BJ (cell line): ENCODE measurements at regions of chr22 and their contacts with region 1.

Region 1: DNA sequence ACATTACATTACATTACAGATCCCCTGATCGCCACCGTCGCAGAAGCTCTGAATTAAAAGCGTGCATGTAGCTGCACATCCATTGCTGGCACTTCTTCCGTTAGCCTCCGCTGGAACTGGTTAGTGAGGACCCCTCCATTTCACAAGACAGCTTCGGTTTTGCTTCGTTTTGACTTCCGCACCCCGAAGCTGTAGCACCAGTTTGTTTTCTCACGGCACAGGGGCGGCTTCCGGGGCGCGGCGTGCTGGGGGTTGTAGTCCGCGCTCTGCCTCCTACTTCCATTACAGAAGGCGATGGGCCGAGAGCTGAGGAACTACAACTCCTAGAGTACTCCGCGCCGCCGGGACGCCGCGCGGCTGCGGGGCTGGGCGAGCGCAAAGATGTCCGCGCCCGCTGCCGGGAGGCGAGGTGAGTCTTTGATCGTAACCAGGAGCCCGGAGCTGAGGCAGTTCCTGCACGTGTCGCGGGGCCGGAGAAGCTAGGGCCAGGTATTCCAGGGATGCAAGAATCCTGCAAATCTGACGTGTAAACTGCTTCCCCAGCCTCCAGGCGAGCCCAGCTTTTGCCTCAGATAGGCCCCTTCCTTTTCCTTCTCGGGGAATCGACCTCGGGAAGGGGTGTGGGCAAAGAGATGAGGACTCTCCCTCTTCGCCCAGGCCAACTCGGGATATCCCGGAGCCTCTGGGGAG is at the start of gene PEX26:
- DNase-seq: peak; percentile 70
- H3K4me3 ChIP-seq: peak within 1 kb of the TSS; percentile 97
- H3K27me3 ChIP-seq: no peaks in the 10 kb centered on the region
- CTCF ChIP-seq: no peak
- polyA plus RNA-seq, gene PEX26: 21.1 and 30.6 TPM in 2 replicates

Region 2: DNA sequence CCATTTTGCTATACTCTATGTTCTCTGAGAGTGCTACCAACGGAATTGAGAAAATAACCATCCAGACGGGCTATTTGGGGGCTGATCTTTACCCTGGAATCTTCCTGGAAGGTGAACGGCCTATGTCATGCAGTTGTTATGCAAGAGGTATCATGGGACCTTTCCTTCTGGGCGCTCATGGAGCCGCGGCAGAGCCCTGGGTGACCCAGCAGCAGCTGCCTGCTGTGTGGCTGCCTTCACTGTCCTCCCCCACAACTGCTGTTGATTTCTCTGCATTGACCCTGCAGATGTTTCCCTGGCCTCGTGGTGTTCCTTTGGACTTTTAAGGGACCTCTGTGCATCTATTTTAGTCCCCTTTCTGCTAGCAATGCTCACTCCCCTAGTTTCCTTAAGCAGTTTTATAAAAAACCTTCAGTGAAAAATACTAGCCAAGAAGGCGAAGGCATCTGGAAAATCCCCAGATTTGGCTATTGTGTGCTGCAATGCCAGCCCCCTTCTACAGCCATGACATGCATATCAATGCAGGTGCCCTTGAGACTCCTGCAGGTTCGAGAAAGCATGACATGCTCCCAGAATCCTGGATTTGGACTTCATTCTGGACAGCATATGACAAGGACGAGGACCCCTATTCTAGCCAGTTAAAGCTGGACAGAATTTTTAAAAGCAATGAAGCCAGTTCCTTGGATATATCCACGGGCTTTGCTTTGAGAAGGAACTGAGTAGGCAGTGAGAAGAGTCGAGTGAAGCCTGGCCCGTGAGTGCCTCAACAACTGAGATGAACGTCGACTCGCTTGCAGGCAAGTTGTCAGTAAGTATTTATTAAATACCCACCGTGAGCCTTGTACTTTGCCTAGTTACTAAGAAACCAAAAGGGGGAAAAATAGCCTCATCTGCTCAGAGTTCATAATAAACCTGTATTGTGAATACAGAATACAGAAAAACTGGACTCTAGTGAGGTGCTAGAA is 514.6 kb before region 1 on chr22 and contains the start of gene SLC25A18:
- CTCF ChIA-PET with region 1: interaction called, 12 read pairs
- POLR2A ChIA-PET with region 1: no interaction called
- DNase-seq: no peak
- H3K4me3 ChIP-seq: no peak within 1 kb of the TSS
- H3K27me3 ChIP-seq: no peaks in the 10 kb centered on the region
- CTCF ChIP-seq: 0 out of 2 replicates have a peak, but pooled peaks have one; percentile 8
- polyA plus RNA-seq, gene SLC25A18: 0.07 TPM in 1 of 2 replicates, not detected in the other

Region 3: GRCh38 chr22:17910561-17911311 is 167.0 kb before region 1 on chr22:
- CTCF ChIA-PET with region 1: interaction called, 46 read pairs
- POLR2A ChIA-PET with region 1: no interaction called
- DNase-seq: peak; percentile 46
- H3K4me3 ChIP-seq: no peak overlapping the region
- H3K27me3 ChIP-seq: no peaks in the 10 kb centered on the region
- CTCF ChIP-seq: peak; percentile 58

Region 4: DNA sequence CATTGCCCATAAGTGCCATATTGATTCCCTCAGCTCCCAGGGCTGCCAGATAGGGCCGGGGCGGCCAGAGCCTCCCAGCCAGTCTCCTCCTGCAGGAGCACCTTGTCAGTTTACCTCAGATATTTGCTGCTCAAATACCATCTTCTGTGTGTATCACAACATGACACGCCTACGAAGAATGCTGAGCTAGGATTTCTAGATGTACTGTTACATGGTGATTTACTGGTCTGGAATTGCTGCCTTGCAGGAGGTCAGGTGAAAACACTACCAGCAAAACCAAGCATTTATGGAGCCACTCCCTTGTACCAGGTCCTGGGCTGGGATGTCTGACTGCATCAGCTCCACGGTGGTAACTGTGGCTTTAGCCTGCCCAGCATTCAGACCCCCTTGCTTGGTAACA is 65.3 kb before region 1 on chr22:
- CTCF ChIA-PET with region 1: interaction called, 11 read pairs
- POLR2A ChIA-PET with region 1: no interaction called
- DNase-seq: no peak
- H3K4me3 ChIP-seq: no peak overlapping the region
- H3K27me3 ChIP-seq: no peaks in the 10 kb centered on the region
- CTCF ChIP-seq: no peak

Region 5: GRCh38 chr22:18057568-18058209 is 20.1 kb before region 1 on chr22:
- CTCF ChIA-PET with region 1: interaction called, 15 read pairs
- POLR2A ChIA-PET with region 1: no interaction called
- DNase-seq: peak; percentile 90
- H3K4me3 ChIP-seq: no peak overlapping the region
- H3K27me3 ChIP-seq: no peaks in the 10 kb centered on the region
- CTCF ChIP-seq: no peak

Region 6: DNA sequence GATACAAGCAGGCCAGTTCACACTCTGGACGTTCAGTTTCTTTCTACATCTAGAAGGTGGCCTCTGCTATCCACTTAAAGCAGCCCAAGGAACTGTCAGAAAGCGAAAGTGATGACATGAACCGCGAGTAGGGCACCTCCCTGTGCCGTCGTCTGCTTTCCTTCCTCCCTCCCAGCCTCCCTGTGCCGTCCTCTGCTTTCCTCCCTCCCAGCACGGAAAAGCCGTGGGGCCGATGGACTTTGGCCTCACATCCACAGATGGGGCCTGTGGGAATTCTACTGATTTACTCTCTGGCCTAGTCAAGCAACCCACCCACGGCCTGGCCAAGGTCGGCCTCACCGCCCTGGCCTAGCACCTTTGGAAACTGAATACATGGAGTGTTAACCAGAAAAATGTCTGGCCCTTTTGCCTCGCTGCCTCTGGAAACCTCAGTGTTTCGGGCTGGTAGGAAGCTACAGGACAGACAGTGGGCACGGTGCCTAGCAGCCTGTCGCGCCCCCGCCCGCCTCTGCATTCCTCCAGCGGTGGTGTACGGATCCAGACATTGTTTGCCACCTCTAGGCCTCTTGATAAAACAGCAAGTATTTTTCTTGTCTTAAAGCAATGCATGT is 14.2 kb after region 1 on chr22:
- CTCF ChIA-PET with region 1: interaction called, 29 read pairs
- POLR2A ChIA-PET with region 1: no interaction called
- DNase-seq: no peak
- H3K4me3 ChIP-seq: no peak overlapping the region
- H3K27me3 ChIP-seq: no peaks in the 10 kb centered on the region
- CTCF ChIP-seq: no peak